ENCODE measurements at regions of chr10 and their contacts with region 1.

Region 1: GRCh38 chr10:6580279-6581029 is 378 bp upstream of the PRKCQ start:
- DNase-seq: peak; percentile 80
- H3K4me3 Mint-ChIP-seq: peak overlapping the region; percentile 98
- H3K27ac Mint-ChIP-seq: peak overlapping the region; percentile 99
- H3K4me1 Mint-ChIP-seq: peaks cover 77% of the 10 kb centered on the region
- H3K27me3 Mint-ChIP-seq: no peaks in the 10 kb centered on the region

Region 2: DNA sequence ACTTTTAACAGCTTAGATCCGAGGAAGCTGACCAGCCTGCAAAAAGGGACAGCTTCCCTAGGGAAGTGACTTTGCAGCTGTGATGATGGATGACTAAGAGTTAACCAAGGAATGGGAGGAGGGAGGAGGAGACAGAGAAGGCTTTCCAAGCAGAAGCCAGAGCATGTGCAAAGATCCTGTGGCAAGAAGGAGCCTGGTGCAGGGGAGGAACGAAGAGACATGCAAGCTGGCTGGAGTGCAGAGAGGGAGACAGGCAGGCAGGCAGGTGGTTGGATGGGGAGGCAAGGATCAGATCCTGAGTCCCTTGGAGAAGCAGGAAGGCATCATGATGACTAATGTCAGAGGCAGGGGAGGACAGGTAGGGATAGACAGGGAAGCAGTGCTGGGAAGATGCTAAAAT is 229.0 kb before region 1 on chr10:
- intact Hi-C with region 1: no loop called
- DNase-seq: no peak
- H3K4me3 Mint-ChIP-seq: no peak overlapping the region
- H3K27ac Mint-ChIP-seq: no peak overlapping the region
- H3K4me1 Mint-ChIP-seq: peaks cover 38% of the 10 kb centered on the region
- H3K27me3 Mint-ChIP-seq: no peaks in the 10 kb centered on the region

Region 3: GRCh38 chr10:6416892-6417512 is 163.5 kb before region 1 on chr10:
- intact Hi-C with region 1: loop called (anchors 1 kb)
- DNase-seq: no peak
- H3K4me3 Mint-ChIP-seq: no peak overlapping the region
- H3K27ac Mint-ChIP-seq: no peak overlapping the region
- H3K4me1 Mint-ChIP-seq: peaks cover 8% of the 10 kb centered on the region
- H3K27me3 Mint-ChIP-seq: peaks cover 1% of the 10 kb centered on the region

Region 4: DNA sequence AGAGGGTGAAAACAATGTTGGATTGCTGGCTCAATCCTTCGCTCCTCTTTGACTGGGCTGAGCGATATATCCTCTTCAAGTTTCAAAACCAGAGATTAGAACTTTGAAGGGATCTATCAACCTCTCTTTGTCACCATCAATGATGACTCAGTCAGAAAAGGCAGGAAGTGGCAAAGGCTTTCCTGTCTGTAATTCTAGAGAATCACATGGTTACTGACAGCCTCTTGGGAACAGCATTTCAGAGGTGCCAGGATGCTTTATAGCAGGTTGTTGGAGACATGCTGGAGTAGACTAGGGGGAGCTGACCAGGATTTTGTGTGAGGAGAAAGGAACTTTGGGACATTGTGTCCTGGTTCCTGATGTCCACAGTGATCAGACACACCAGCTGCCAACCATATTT is 81.7 kb before region 1 on chr10:
- intact Hi-C with region 1: loop called (anchors 1 kb)
- DNase-seq: peak; percentile 63
- H3K4me3 Mint-ChIP-seq: peak overlapping the region; percentile 68
- H3K27ac Mint-ChIP-seq: peak overlapping the region; percentile 88
- H3K4me1 Mint-ChIP-seq: peaks cover 44% of the 10 kb centered on the region
- H3K27me3 Mint-ChIP-seq: no peaks in the 10 kb centered on the region

Region 5: GRCh38 chr10:6530211-6530840 is 50.1 kb before region 1 on chr10:
- intact Hi-C with region 1: loop called (anchors 1 kb)
- DNase-seq: peak; percentile 78
- H3K4me3 Mint-ChIP-seq: peak overlapping the region; percentile 80
- H3K27ac Mint-ChIP-seq: peak overlapping the region; percentile 99
- H3K4me1 Mint-ChIP-seq: peaks cover 75% of the 10 kb centered on the region
- H3K27me3 Mint-ChIP-seq: no peaks in the 10 kb centered on the region

Region 6: GRCh38 chr10:6593241-6593671 is 12.8 kb after region 1 on chr10:
- intact Hi-C with region 1: loop called (anchors 1 kb)
- DNase-seq: no peak
- H3K4me3 Mint-ChIP-seq: peak overlapping the region; percentile 34
- H3K27ac Mint-ChIP-seq: peak overlapping the region; percentile 93
- H3K4me1 Mint-ChIP-seq: peaks cover 95% of the 10 kb centered on the region
- H3K27me3 Mint-ChIP-seq: no peaks in the 10 kb centered on the region

Region 7: DNA sequence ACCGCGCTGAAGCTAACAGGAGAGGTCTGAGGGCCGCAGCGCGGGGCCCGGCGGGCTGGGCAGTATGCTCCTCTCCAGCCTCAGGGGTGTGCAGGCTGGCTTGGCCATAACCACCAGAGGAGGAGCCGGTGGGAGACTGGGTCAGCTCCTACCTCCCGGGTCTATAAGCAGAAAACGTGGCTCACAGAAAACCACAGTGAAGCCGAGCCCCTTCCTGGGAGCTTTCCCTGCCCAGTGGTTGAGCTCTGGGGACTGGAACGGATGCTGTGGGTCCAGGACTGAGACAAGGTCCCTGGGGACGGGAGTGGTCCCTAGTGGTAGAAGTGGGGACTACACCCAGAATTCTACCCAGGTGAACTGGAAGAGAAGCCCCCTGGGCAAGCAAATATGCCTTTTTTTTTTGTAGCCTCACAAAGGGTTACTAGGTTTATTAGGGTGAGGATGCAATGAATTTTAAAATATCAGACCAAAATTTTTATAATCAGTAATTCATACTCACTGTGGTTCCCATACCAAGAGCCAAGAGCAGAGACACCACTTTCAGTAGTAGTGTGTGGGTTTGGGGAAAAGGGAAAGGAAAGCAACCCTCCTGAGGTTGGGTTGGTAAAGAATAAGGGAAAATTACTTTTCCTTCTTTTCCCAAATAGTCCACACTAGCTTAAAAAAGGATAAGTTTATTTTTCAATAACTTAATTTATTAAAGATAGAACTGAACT is 67.5 kb after region 1 on chr10:
- intact Hi-C with region 1: loop called (anchors 1 kb)
- DNase-seq: peak; percentile 58
- H3K4me3 Mint-ChIP-seq: no peak overlapping the region
- H3K27ac Mint-ChIP-seq: no peak overlapping the region
- H3K4me1 Mint-ChIP-seq: peaks cover 51% of the 10 kb centered on the region
- H3K27me3 Mint-ChIP-seq: no peaks in the 10 kb centered on the region